ENCODE measurements at regions of chr1 and their contacts with region 1.

Region 1: GRCh38 chr1:64469977-64470664 is at the start of gene CACHD1:
- DNase-seq: peak in 1 of 2 donors; percentile 87
- H3K4me3 ChIP-seq: peak within 1 kb of the TSS; percentile 82 to 94
- H3K27ac ChIP-seq: peak within 1 kb of the TSS; percentile 80 to 94
- H3K4me1 ChIP-seq: peaks cover 0 to 5% of the 10 kb centered on the region in 2 donors
- H3K27me3 ChIP-seq: no peaks in the 10 kb centered on the region
- CTCF ChIP-seq: peak; percentile 31 to 62 (median 51)
- total RNA-seq, gene CACHD1: 4.3 TPM

Region 2: GRCh38 chr1:64212031-64212430 is 258.1 kb before region 1 on chr1:
- intact Hi-C with region 1: no loop called
- DNase-seq: no peak
- H3K4me3 ChIP-seq: no peak overlapping the region
- H3K27ac ChIP-seq: no peak overlapping the region
- H3K4me1 ChIP-seq: no peaks in the 10 kb centered on the region
- H3K27me3 ChIP-seq: no peaks in the 10 kb centered on the region
- CTCF ChIP-seq: no peak

Region 3: GRCh38 chr1:64440183-64440826 is 29.8 kb before region 1 on chr1:
- intact Hi-C with region 1: no loop called
- DNase-seq: no peak
- H3K4me3 ChIP-seq: no peak overlapping the region
- H3K27ac ChIP-seq: no peak overlapping the region
- H3K4me1 ChIP-seq: no peaks in the 10 kb centered on the region
- H3K27me3 ChIP-seq: no peaks in the 10 kb centered on the region
- CTCF ChIP-seq: no peak

Region 4: DNA sequence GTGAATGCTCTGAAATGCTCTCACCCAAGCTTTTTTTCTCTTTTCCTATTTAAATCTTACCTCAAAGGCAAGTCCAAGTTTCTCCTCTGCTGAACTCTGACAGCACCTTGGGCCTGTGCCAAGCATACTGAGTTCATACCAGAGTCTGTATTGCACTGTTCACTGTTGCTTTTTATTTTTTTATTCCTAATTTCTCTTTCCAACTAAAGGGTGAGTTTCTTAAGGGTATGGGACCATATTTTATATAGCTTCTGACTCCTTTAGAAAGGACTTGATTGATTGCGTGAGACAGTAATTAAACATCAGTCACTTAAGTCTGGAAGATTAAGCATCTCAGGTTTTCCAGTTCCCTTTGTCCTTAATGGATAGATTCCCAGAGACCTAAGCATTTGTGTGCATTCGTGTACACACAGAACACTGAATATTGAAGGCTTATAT is 69.7 kb after region 1 on chr1:
- intact Hi-C with region 1: loop called (anchors 5 kb)
- DNase-seq: peak in 1 of 2 donors; percentile 82
- H3K4me3 ChIP-seq: peak overlapping the region in 1 of 2 donors; percentile 51
- H3K27ac ChIP-seq: peak overlapping the region in 1 of 2 donors; percentile 46
- H3K4me1 ChIP-seq: peaks cover 0 to 6% of the 10 kb centered on the region in 2 donors
- H3K27me3 ChIP-seq: no peaks in the 10 kb centered on the region
- CTCF ChIP-seq: no peak

Region 5: GRCh38 chr1:64675718-64676345 is 205.7 kb after region 1 on chr1:
- intact Hi-C with region 1: loop called (anchors 5 kb)
- DNase-seq: no peak
- H3K4me3 ChIP-seq: no peak overlapping the region
- H3K27ac ChIP-seq: no peak overlapping the region
- H3K4me1 ChIP-seq: no peaks in the 10 kb centered on the region
- H3K27me3 ChIP-seq: no peaks in the 10 kb centered on the region
- CTCF ChIP-seq: peak; percentile 17 to 76 (median 69)

Measured in ascending aorta (tissue), 2 donors.